Naive thymus-derived CD4-positive, alpha-beta T cell (primary cell): ENCODE measurements at regions of chr6 and their contacts with region 1.

Region 1: GRCh38 chr6:79869600-79870084 is 77.7 kb downstream of the ELOVL4 start:
- DNase-seq: peak; percentile 57 to 79 (median 71)
- ATAC-seq: peak; percentile 98
- H3K4me3 ChIP-seq: no peak overlapping the region
- H3K4me3 Mint-ChIP-seq: peak overlapping the region; percentile 40 to 77 (median 68)
- H3K27ac ChIP-seq: no peak overlapping the region
- H3K27ac Mint-ChIP-seq: peak overlapping the region in 3 of 9 donors; percentile 53 to 56 (median 56)
- H3K4me1 ChIP-seq: no peaks in the 10 kb centered on the region
- H3K4me1 Mint-ChIP-seq: peaks cover 7 to 20% (median 10%) of the 10 kb centered on the region in 7 donors
- H3K27me3 ChIP-seq: no peaks in the 10 kb centered on the region
- H3K27me3 Mint-ChIP-seq: peaks cover 4 to 19% (median 4%) of the 10 kb centered on the region in 5 donors

Region 2: DNA sequence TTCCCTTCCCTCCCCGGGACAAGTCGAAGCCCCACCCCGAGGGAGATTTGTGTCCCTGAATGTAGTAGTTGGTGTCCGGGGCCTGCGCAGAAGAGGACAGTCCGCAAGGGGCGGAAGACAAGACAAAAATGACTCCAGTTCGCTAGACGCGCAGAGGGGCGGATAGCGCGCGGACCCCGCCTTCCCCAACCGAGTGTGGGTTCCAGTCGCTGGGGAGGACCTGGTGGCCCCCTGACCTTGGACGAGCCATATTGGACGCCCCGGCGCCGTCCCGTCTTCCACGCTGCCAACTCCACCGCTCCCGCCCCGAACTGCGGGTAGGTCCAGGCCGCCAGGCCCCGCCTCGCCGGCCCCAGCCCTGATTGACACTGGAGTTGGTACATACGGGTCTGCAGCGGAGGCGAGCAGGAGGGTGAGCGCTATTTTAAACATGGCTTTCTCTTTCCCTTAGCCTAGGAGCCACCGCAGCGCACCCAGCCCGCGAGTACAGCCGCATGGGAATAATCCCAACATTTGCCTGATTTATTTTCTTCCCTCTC is 636.0 kb before region 1 on chr6:
- CTCF ChIA-PET with region 1: no interaction called
- POLR2A ChIA-PET with region 1: no interaction called
- intact Hi-C with region 1: loop called in 1 of 2 experiments (anchors 5 kb)
- DNase-seq: peak; percentile 34 to 77 (median 54)
- ATAC-seq: peak; percentile 63
- H3K4me3 ChIP-seq: peak overlapping the region; percentile 89
- H3K4me3 Mint-ChIP-seq: peak overlapping the region; percentile 92 to 100 (median 98)
- H3K27ac ChIP-seq: peak overlapping the region; percentile 62
- H3K27ac Mint-ChIP-seq: peak overlapping the region; percentile 64 to 96 (median 90)
- H3K4me1 ChIP-seq: peaks cover 4 to 8% of the 10 kb centered on the region in 2 donors
- H3K4me1 Mint-ChIP-seq: peaks cover 9 to 42% (median 30%) of the 10 kb centered on the region in 7 donors
- H3K27me3 ChIP-seq: no peaks in the 10 kb centered on the region
- H3K27me3 Mint-ChIP-seq: no peaks in the 10 kb centered on the region

Region 3: GRCh38 chr6:79646006-79646405 is 223.6 kb before region 1 on chr6:
- CTCF ChIA-PET with region 1: no interaction called
- POLR2A ChIA-PET with region 1: no interaction called
- intact Hi-C with region 1: loop called in 1 of 2 experiments (anchors 2 kb)
- DNase-seq: peak in 5 of 9 donors; percentile 31 to 50 (median 42)
- ATAC-seq: peak; percentile 70
- H3K4me3 ChIP-seq: no peak overlapping the region
- H3K4me3 Mint-ChIP-seq: peak overlapping the region in 1 of 10 donors; percentile 36
- H3K27ac ChIP-seq: no peak overlapping the region
- H3K27ac Mint-ChIP-seq: peak overlapping the region in 1 of 9 donors; percentile 41
- H3K4me1 ChIP-seq: no peaks in the 10 kb centered on the region
- H3K4me1 Mint-ChIP-seq: peaks cover 0 to 35% (median 15%) of the 10 kb centered on the region in 7 donors
- H3K27me3 ChIP-seq: no peaks in the 10 kb centered on the region
- H3K27me3 Mint-ChIP-seq: peaks cover 5 to 16% (median 10%) of the 10 kb centered on the region in 5 donors

Region 4: DNA sequence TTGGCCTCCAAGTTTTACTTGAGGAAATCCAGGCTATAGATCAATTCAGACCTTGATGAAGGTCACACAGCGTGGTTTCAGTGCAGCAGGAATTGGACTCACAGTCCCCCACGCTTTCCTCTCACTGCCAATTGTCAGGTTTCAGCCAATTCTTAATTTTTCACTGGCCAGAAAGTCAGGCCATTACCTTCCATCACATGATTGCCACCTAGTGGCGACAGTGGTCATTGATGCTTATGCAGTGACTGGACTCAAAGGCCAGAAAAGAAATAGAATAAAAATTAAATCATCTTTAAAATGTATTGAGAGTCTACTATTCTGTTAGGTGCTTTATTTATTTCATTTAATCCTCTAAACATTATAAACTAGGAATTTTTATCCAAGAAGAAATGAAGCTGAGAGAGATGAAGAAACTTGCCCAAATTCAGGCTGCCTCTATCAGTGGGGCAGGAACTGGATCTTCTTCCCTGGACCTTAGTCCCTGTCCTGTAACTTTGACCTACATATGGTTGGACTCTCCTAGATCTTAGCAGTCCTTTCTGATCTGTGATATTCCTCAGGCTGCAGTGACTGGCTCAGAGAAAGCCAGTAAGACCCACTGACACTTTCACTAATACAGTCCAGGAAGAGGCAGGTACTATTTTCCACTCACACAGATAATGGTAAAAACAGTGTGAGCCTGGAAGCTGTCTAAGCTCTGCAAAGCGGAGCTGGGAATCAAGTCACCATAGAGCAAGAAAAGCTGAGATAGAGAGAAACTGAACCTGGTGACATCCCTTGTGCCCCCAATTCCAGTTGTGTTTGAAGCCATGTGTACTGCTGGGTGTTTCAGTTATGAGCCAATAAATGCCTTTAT is 55.6 kb before region 1 on chr6:
- CTCF ChIA-PET with region 1: interaction called, 3 read pairs
- POLR2A ChIA-PET with region 1: no interaction called
- intact Hi-C with region 1: loop called (anchors 2 kb)
- DNase-seq: peak; percentile 2 to 53 (median 32)
- ATAC-seq: peak; percentile 64
- H3K4me3 ChIP-seq: no peak overlapping the region
- H3K4me3 Mint-ChIP-seq: no peak overlapping the region
- H3K27ac ChIP-seq: no peak overlapping the region
- H3K27ac Mint-ChIP-seq: no peak overlapping the region
- H3K4me1 ChIP-seq: no peaks in the 10 kb centered on the region
- H3K4me1 Mint-ChIP-seq: no peaks in the 10 kb centered on the region
- H3K27me3 ChIP-seq: no peaks in the 10 kb centered on the region
- H3K27me3 Mint-ChIP-seq: peaks cover 2 to 20% (median 5%) of the 10 kb centered on the region in 5 donors

Region 5: GRCh38 chr6:80004173-80005072 is 134.8 kb after region 1 on chr6 and contains the start of gene TTK:
- CTCF ChIA-PET with region 1: interaction called, 3 read pairs
- POLR2A ChIA-PET with region 1: no interaction called
- intact Hi-C with region 1: loop called (anchors 1 to 5 kb)
- DNase-seq: peak; percentile 84 to 94 (median 91)
- ATAC-seq: peak; percentile 100
- H3K4me3 ChIP-seq: peak within 1 kb of the TSS; percentile 94
- H3K4me3 Mint-ChIP-seq: peak within 1 kb of the TSS; percentile 80 to 97 (median 90)
- H3K27ac ChIP-seq: peak within 1 kb of the TSS; percentile 80
- H3K27ac Mint-ChIP-seq: peak within 1 kb of the TSS; percentile 65 to 97 (median 94)
- H3K4me1 ChIP-seq: peaks cover 9 to 10% of the 10 kb centered on the region in 2 donors
- H3K4me1 Mint-ChIP-seq: peaks cover 2 to 41% (median 19%) of the 10 kb centered on the region in 7 donors
- H3K27me3 ChIP-seq: no peaks in the 10 kb centered on the region
- H3K27me3 Mint-ChIP-seq: peaks cover 0 to 5% (median 0%) of the 10 kb centered on the region in 5 donors
- total RNA-seq, gene TTK: 0.13 to 22.4 (median 0.81) TPM

Region 6: GRCh38 chr6:80106418-80107235 is 237.0 kb after region 1 on chr6 and contains the start of gene BCKDHB:
- CTCF ChIA-PET with region 1: no interaction called
- POLR2A ChIA-PET with region 1: no interaction called
- intact Hi-C with region 1: loop called in 1 of 2 experiments (anchors 5 kb)
- DNase-seq: peak; percentile 91 to 99 (median 98)
- ATAC-seq: peak; percentile 99
- H3K4me3 ChIP-seq: peak within 1 kb of the TSS; percentile 77
- H3K4me3 Mint-ChIP-seq: peak within 1 kb of the TSS; percentile 86 to 98 (median 94)
- H3K27ac ChIP-seq: peak within 1 kb of the TSS; percentile 75
- H3K27ac Mint-ChIP-seq: peak within 1 kb of the TSS; percentile 78 to 94 (median 91)
- H3K4me1 ChIP-seq: peaks cover 0 to 6% of the 10 kb centered on the region in 2 donors
- H3K4me1 Mint-ChIP-seq: peaks cover 17 to 34% (median 24%) of the 10 kb centered on the region in 7 donors
- H3K27me3 ChIP-seq: no peaks in the 10 kb centered on the region
- H3K27me3 Mint-ChIP-seq: peaks cover 5 to 16% (median 11%) of the 10 kb centered on the region in 5 donors
- total RNA-seq, gene BCKDHB: 13.8 to 22.1 (median 17.4) TPM